CD8-positive, alpha-beta memory T cell (primary cell): ENCODE measurements at regions of chr6 and their contacts with region 1.

Region 1: DNA sequence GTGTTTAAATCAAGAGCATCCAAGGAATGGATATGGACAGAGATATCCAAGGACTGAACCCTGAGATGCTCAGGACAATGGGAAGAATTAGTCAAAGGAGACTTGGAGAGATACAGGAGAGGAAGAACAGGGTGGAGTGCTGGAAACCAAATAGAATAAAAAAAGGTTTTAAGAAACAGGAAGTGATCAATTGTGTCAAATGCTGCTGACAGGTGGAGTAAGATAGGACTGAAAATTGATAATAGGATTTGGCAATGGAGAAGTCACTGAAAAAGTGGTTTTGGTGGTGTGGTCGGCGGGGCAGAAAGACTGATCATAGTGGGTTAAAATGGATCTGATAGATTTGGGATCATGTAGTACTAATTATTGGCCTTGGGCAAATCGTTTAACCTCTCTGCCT is 37.9 kb upstream of the PNRC1 start:
- DNase-seq: no peak
- H3K4me3 ChIP-seq: no peak overlapping the region
- H3K4me3 Mint-ChIP-seq: no peak overlapping the region
- H3K27ac ChIP-seq: no peak overlapping the region
- H3K27ac Mint-ChIP-seq: no peak overlapping the region
- H3K4me1 ChIP-seq: no peaks in the 10 kb centered on the region
- H3K4me1 Mint-ChIP-seq: peaks cover 4 to 7% (median 6%) of the 10 kb centered on the region in 3 donors
- H3K27me3 ChIP-seq: no peaks in the 10 kb centered on the region
- H3K27me3 Mint-ChIP-seq: peaks cover 0 to 3% of the 10 kb centered on the region in 2 donors

Region 2: GRCh38 chr6:89066940-89067646 is 24.4 kb after region 1 on chr6:
- CTCF ChIA-PET with region 1: no interaction called
- POLR2A ChIA-PET with region 1: interaction called, 11 read pairs
- DNase-seq: no peak
- H3K4me3 ChIP-seq: no peak overlapping the region
- H3K4me3 Mint-ChIP-seq: no peak overlapping the region
- H3K27ac ChIP-seq: no peak overlapping the region
- H3K27ac Mint-ChIP-seq: no peak overlapping the region
- H3K4me1 ChIP-seq: no peaks in the 10 kb centered on the region
- H3K4me1 Mint-ChIP-seq: no peaks in the 10 kb centered on the region
- H3K27me3 ChIP-seq: no peaks in the 10 kb centered on the region
- H3K27me3 Mint-ChIP-seq: peaks cover 2 to 16% of the 10 kb centered on the region in 2 donors

Region 3: DNA sequence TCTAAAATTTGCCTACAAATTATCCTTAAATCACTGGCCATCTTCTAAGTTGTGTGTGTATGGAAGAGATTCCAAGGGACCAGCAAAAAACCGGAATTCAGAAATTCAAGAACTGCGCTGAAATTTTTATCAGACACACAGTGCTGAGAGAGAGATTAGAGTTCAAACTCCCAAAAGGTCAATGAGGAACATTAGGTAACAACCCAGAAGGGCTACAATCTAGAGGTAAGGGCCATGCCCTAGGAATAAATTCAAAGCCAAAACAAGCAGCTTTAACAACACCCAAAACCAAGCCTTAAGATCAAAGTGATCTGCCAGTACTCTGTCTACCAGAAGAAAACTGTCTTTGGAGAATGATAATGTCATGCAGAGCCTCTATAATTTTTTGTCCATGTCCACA is 57.5 kb after region 1 on chr6:
- CTCF ChIA-PET with region 1: no interaction called
- POLR2A ChIA-PET with region 1: no interaction called
- DNase-seq: no peak
- H3K4me3 ChIP-seq: no peak overlapping the region
- H3K4me3 Mint-ChIP-seq: no peak overlapping the region
- H3K27ac ChIP-seq: no peak overlapping the region
- H3K27ac Mint-ChIP-seq: no peak overlapping the region
- H3K4me1 ChIP-seq: no peaks in the 10 kb centered on the region
- H3K4me1 Mint-ChIP-seq: peaks cover 6 to 16% (median 7%) of the 10 kb centered on the region in 3 donors
- H3K27me3 ChIP-seq: no peaks in the 10 kb centered on the region
- H3K27me3 Mint-ChIP-seq: no peaks in the 10 kb centered on the region